ENCODE measurements at regions of chr1 and their contacts with region 1.

Region 1: GRCh38 chr1:58584082-58584895 is 7.2 kb upstream of the TACSTD2 start:
- DNase-seq: no peak
- ATAC-seq: peak; percentile 83
- H3K4me3 Mint-ChIP-seq: no peak overlapping the region
- H3K27ac Mint-ChIP-seq: no peak overlapping the region
- H3K4me1 Mint-ChIP-seq: peaks cover 11% of the 10 kb centered on the region
- H3K27me3 Mint-ChIP-seq: peaks cover 41% of the 10 kb centered on the region

Region 2: GRCh38 chr1:58573705-58574591 is 10.3 kb before region 1 on chr1:
- CTCF ChIA-PET with region 1: no interaction called
- POLR2A ChIA-PET with region 1: no interaction called
- intact Hi-C with region 1: loop called in 1 of 2 experiments (anchors 1 kb)
- DNase-seq: peak; percentile 70
- ATAC-seq: peak; percentile 97
- H3K4me3 Mint-ChIP-seq: no peak overlapping the region
- H3K27ac Mint-ChIP-seq: no peak overlapping the region
- H3K4me1 Mint-ChIP-seq: peaks cover 38% of the 10 kb centered on the region
- H3K27me3 Mint-ChIP-seq: peaks cover 65% of the 10 kb centered on the region